ENCODE measurements at regions of chr10 and their contacts with region 1.

Region 1: DNA sequence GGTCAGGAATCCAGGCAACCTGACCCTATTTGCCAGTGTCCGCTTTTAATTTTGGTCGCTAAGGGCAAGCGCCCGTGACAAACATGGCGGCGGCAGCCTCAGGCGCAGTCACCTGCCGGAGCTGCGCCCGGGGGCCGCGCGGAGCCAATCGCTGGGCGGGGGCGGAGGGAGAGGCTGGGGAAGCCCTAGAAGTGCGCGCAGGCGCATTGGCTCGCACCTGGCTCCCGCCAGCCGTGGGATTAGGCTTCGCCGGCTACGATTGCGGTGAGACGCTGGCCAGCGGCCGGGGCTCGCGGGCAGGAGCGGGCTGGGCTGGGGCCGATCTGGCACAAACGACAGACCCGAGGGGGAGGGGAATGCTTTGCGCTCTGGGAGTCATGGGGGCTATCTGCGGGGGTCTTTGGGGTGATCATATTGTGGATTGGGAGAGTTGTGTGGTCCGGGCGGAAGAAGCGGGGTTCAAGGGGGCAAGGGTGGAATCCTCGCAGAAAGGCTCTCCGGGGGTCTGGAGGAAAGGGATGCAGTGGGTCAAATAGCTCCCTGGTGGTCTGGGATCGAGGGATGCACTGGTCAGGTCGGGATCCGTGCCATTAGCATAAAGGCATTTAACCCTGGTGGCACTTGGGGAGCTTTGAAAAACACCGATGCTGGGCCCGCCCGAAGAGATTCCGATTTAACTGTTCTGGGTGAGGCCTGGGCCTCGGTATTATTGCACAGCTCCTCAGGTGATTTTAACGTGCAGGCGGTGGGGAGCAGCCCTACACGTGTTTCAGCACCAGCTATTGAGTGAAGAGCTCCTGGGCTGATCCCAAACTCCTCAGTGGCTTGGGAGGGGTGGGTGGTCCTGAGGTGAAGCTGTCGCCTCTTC is 10.1 kb upstream of the C10orf95 start:
- DNase-seq: peak; percentile 96

Region 2: GRCh38 chr10:102432162-102432950 is 29.1 kb before region 1 on chr10 and contains the start of gene CUEDC2:
- intact Hi-C with region 1: loop called (anchors 2 kb)
- DNase-seq: peak; percentile 99
- total RNA-seq, gene CUEDC2: 62.4 TPM

Measured in cardiac septum (tissue), 1 donor.